Activated CD4-positive, alpha-beta memory T cell treated with anti-CD3 and anti-CD28 coated beads for 36 hours (primary cell): ENCODE measurements at regions of chr12 and their contacts with region 1.

Region 1: DNA sequence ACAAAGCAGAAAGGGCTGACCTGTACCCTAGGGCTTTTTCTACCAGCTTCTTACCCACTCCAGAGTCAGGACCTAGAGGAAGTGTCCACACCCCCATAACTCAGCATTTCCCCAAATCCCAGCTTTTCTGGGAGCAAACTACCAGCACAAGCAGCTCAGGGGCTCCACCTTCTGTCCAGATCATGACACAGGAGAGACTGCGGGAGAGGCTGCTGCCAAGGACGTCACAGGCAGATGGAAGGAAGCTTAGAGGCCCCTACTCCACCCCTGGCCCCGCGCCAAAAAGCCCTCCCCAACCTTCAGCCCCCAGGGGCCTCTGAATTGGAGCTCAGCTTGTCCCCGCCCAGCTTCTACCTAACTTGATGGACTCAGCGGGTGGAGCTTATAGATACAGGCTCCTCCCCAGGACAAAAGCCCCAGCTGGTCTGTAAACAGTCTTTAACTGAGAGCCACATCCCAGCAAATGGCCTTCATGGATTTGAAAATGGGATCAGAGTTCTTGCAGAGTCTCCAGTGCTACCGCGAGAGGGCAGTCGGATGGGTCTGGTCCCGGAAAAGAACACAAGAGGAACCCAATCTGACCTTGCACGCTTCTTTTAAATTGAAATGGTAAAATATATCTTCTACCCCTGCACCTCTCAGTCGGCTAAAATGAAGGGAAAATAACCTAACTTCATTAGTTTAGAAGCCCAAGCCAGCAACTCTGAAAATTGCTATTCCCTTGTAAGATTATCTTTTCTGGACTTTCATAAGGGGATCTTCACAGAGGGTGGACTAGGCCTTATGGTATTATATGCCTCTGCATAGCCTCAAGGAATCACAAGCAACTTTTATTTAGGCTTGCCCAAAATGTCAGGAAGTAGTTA is 6.8 kb upstream of the BAZ2A start:
- DNase-seq: peak; percentile 96
- H3K4me3 Mint-ChIP-seq: peak overlapping the region; percentile 82
- H3K27ac Mint-ChIP-seq: peak overlapping the region; percentile 86
- H3K4me1 Mint-ChIP-seq: peaks cover 45% of the 10 kb centered on the region
- H3K27me3 Mint-ChIP-seq: no peaks in the 10 kb centered on the region

Region 2: DNA sequence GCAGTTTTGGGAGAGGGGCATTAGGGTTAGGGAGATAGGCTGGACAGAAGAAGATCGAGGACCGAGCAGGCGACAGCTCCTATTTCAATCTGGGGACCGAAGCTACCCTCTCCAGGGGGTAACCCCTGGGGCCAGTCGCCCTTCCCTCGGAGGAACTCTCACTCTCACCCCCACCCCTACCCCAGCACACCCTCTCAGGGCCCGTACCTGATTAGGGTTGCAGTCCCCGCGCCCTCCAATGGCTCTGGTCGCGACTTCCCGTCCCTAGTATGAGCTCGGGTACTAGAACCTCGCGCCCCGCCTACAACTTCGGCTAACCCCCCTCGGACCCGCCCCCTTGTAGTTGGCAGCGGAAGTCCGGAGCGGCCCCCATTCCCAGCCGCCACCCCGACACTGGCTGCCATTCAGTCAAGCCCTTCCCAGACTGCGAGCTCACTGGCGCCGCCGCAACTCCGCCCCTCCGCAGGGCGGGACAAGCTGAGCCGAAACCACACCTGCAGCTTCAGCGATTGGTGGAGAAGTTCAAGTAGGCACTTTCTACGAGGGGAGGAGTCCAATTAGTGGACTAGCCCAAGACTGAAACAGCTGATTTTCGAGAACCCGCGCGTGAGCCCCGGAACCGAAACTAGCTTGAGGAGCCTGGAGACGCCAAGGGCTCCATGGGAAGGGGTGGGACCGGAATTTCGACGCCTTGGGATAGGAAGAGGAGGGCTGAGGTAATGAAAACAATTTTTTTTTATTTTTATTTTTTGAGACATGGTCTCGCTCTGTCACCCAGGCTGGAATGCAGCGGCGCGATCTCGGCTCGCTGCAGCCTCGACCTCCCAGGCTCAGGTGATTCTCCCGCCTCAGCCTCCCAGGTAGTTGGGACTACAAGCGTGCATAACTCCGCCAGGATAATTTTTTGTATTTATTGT is 276.8 kb before region 1 on chr12 and contains the start of gene STAT2:
- CTCF ChIA-PET with region 1: interaction called, 4 read pairs
- POLR2A ChIA-PET with region 1: interaction called, 6 read pairs
- intact Hi-C with region 1: loop called (anchors 5 kb)
- DNase-seq: peak; percentile 100
- H3K4me3 Mint-ChIP-seq: peak within 1 kb of the TSS; percentile 89
- H3K27ac Mint-ChIP-seq: peak within 1 kb of the TSS; percentile 94
- H3K4me1 Mint-ChIP-seq: peaks cover 19% of the 10 kb centered on the region
- H3K27me3 Mint-ChIP-seq: no peaks in the 10 kb centered on the region
- total RNA-seq, gene STAT2: 125 to 139 TPM

Region 3: GRCh38 chr12:56457817-56458216 is 179.1 kb before region 1 on chr12:
- CTCF ChIA-PET with region 1: no interaction called
- POLR2A ChIA-PET with region 1: no interaction called
- intact Hi-C with region 1: no loop called
- DNase-seq: no peak
- H3K4me3 Mint-ChIP-seq: no peak overlapping the region
- H3K27ac Mint-ChIP-seq: no peak overlapping the region
- H3K4me1 Mint-ChIP-seq: no peaks in the 10 kb centered on the region
- H3K27me3 Mint-ChIP-seq: no peaks in the 10 kb centered on the region

Region 4: GRCh38 chr12:56622535-56622934 is 14.4 kb before region 1 on chr12:
- CTCF ChIA-PET with region 1: interaction called, 28 read pairs
- POLR2A ChIA-PET with region 1: interaction called, 4 read pairs
- intact Hi-C with region 1: no loop called
- DNase-seq: no peak
- H3K4me3 Mint-ChIP-seq: no peak overlapping the region
- H3K27ac Mint-ChIP-seq: no peak overlapping the region
- H3K4me1 Mint-ChIP-seq: peaks cover 58% of the 10 kb centered on the region
- H3K27me3 Mint-ChIP-seq: no peaks in the 10 kb centered on the region

Region 5: GRCh38 chr12:56724972-56725722 is 88.2 kb after region 1 on chr12 and contains the start of gene NACA:
- CTCF ChIA-PET with region 1: interaction called, 7 read pairs
- POLR2A ChIA-PET with region 1: interaction called, 12 read pairs
- intact Hi-C with region 1: loop called (anchors 2 kb)
- DNase-seq: peak; percentile 99
- H3K4me3 Mint-ChIP-seq: peak within 1 kb of the TSS; percentile 96
- H3K27ac Mint-ChIP-seq: peak within 1 kb of the TSS; percentile 94
- H3K4me1 Mint-ChIP-seq: peaks cover 44% of the 10 kb centered on the region
- H3K27me3 Mint-ChIP-seq: no peaks in the 10 kb centered on the region
- total RNA-seq, gene NACA: 1,098 to 1,103 TPM